ENCODE measurements at regions of chr1 and their contacts with region 1.

Region 1: DNA sequence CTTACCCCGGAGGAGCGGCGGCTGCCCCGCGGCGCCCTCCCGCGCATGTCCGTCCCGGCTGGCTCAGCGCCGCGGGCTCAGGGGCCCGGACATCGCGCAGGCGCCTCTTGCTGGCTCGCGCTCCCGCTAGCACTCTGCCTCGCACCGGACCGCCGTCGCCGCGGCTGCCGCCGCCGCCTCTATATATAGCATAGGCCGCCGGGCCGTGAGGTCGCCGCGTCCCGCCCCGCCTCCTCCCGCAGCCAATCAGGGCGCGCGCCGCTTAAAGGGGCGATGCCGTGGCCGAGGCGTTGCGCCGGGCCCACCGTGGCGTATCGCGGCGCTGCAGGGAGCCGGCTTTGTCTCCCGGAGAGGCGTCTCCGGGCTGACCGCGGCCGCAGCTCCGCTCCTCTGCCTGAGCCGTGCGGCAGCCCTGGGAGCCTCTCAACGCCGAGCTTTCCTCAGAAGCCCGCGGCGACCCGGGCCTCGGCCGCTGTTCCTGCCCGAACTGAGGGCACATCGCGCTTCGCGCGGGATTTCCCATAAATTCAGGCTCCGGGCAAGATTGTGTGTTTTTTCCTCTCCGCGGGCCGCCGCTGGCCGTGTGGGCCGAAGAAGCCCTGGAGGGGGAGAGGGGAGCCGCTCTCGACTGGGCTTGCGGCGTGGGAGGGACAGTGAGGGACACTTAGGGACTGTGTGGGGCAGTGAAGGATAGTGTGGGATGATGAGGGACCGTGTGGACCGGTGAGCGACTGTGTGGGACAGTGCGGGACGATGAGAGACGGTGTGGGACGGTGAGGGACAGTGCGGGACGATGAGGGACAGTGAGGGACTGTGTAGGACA is at the start of gene ERRFI1:
- DNase-seq: peak; percentile 70 to 92 (median 77)
- ATAC-seq: peak; percentile 97
- H3K4me3 ChIP-seq: peak within 1 kb of the TSS; percentile 36
- H3K4me3 Mint-ChIP-seq: peak within 1 kb of the TSS; percentile 78 to 96 (median 88)
- H3K27ac ChIP-seq: peak within 1 kb of the TSS; percentile 49
- H3K27ac Mint-ChIP-seq: peak within 1 kb of the TSS; percentile 16 to 89 (median 65)
- H3K4me1 ChIP-seq: peaks cover 6 to 11% of the 10 kb centered on the region in 2 donors
- H3K4me1 Mint-ChIP-seq: peaks cover 7 to 12% (median 10%) of the 10 kb centered on the region in 7 donors
- H3K27me3 ChIP-seq: peaks cover 0 to 7% of the 10 kb centered on the region in 2 donors
- H3K27me3 Mint-ChIP-seq: peaks cover 7 to 73% (median 23%) of the 10 kb centered on the region in 5 donors
- total RNA-seq, gene ERRFI1: 0.36 to 1.7 (median 0.98) TPM

Region 2: DNA sequence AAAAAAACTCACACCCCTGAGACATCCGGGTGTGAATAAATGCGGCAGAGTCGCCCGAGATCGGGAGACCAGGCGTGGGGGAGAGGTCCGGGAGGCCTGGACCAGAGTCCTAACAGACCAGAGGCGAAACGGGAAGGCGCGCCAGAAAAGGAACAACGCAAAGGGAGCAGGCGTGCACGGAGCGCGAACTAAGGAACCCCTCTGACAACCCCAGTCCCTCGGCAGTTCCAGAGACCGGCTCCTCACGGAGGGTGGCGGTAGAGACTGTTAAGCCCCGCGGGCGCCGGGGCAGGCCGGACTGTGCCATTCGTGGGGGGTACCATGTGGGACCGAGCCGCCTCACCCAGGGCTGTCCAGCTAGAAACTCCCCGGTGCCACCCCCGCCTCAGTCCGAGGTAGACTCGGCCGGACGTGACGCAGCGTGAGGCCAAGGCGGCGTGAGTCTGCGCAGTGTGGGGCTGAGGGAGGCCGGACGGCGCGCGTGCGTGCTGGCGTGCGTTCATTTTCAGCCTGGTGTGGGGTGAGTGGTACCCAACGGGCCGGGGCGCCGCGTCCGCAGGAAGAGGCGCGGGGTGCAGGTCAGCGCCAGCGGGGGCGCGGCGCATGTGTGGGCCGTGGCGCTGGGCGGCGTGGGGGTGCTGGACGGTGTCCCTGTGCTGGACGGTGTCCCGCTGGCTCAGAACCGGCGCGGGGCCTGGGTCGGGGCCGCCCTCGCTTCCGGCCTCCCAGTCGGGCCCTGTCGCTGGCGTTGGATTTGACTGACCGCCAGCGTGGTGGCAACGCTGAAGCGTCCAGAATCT is 64.9 kb before region 1 on chr1 and contains the start of gene PARK7:
- CTCF ChIA-PET with region 1: no interaction called
- POLR2A ChIA-PET with region 1: no interaction called
- intact Hi-C with region 1: loop called in 1 of 2 experiments (anchors 1 kb)
- DNase-seq: peak; percentile 97 to 100 (median 99)
- ATAC-seq: peak; percentile 99
- H3K4me3 ChIP-seq: peak within 1 kb of the TSS; percentile 65
- H3K4me3 Mint-ChIP-seq: peak within 1 kb of the TSS; percentile 84 to 100 (median 98)
- H3K27ac ChIP-seq: peak within 1 kb of the TSS; percentile 95
- H3K27ac Mint-ChIP-seq: peak within 1 kb of the TSS; percentile 97 to 100 (median 99)
- H3K4me1 ChIP-seq: peaks cover 28 to 44% of the 10 kb centered on the region in 2 donors
- H3K4me1 Mint-ChIP-seq: peaks cover 16 to 80% (median 58%) of the 10 kb centered on the region in 7 donors
- H3K27me3 ChIP-seq: no peaks in the 10 kb centered on the region
- H3K27me3 Mint-ChIP-seq: no peaks in the 10 kb centered on the region
- total RNA-seq, gene PARK7: 97.1 to 255 (median 106) TPM

Region 3: GRCh38 chr1:8015036-8015808 is 11.1 kb before region 1 on chr1:
- CTCF ChIA-PET with region 1: interaction called, 7 read pairs
- POLR2A ChIA-PET with region 1: interaction called, 3 read pairs
- intact Hi-C with region 1: loop called (anchors 1 to 2 kb)
- DNase-seq: peak in 8 of 9 donors; percentile 32 to 67 (median 58)
- ATAC-seq: peak; percentile 80
- H3K4me3 ChIP-seq: no peak overlapping the region
- H3K4me3 Mint-ChIP-seq: no peak overlapping the region
- H3K27ac ChIP-seq: no peak overlapping the region
- H3K27ac Mint-ChIP-seq: no peak overlapping the region
- H3K4me1 ChIP-seq: no peaks in the 10 kb centered on the region
- H3K4me1 Mint-ChIP-seq: peaks cover 0 to 3% (median 0%) of the 10 kb centered on the region in 7 donors
- H3K27me3 ChIP-seq: peaks cover 0 to 7% of the 10 kb centered on the region in 2 donors
- H3K27me3 Mint-ChIP-seq: peaks cover 16 to 31% (median 27%) of the 10 kb centered on the region in 5 donors

Region 4: DNA sequence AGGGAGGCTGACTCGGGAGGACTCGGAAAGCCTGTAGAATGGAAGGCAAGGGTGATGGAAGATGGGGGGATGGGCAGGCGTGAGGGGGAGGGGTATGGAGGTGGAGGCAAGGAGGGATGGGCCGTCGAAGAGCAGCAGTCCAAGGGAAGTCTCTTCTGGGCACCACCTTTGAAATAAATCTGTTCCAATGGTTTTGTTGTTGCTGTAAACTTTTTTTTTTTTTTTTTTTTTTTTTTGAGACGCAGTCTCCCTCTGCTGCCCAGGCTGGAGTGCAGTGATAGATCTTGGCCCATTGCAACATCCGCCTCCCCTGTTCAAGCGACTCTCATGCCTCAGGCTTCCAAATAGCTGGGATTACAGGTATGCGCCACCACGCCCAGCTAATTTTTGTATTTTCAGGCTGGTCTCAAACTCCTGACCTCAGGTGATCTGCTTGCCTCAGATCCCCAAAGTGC is 212.5 kb after region 1 on chr1:
- CTCF ChIA-PET with region 1: interaction called, 4 read pairs
- POLR2A ChIA-PET with region 1: no interaction called
- intact Hi-C with region 1: loop called in 1 of 2 experiments (anchors 1 kb)
- DNase-seq: no peak
- ATAC-seq: no peak
- H3K4me3 ChIP-seq: no peak overlapping the region
- H3K4me3 Mint-ChIP-seq: no peak overlapping the region
- H3K27ac ChIP-seq: no peak overlapping the region
- H3K27ac Mint-ChIP-seq: no peak overlapping the region
- H3K4me1 ChIP-seq: no peaks in the 10 kb centered on the region
- H3K4me1 Mint-ChIP-seq: peaks cover 0 to 9% (median 6%) of the 10 kb centered on the region in 7 donors
- H3K27me3 ChIP-seq: no peaks in the 10 kb centered on the region
- H3K27me3 Mint-ChIP-seq: peaks cover 0 to 8% (median 7%) of the 10 kb centered on the region in 5 donors

Region 5: DNA sequence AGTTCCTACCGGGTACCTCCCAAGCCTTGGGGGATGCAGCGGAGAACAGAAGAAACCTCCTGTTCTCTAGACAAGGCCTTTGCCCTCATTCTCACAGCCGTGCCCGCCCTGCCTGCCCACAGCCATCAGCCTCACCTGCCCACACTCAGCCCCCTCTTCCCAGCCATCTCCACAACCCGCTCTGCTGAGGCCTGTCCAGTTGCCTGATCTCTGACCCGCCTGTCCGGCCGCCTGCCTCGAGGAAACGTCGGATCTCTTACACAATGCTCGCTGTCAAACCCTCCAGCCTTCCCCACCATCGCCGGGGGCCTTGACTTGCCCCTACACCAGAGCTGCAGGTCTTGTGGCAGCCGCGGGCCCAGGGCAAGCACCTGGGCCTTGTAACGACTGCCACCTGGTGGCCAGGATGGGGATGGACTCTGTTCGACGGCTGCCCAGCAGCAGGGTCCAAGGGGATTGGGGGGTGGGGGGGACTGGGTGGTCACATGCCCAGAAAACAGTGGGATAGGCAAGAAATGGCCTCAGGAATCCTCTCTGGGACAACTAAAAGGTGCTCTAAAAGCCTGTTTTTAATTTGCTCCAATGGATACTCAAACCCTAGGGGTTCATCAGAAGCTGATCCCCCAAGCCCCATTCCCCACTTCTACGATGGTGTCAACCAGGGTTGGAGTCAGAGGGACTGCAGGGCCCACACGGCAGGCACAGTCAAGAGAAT is 322.6 kb after region 1 on chr1:
- CTCF ChIA-PET with region 1: interaction called, 32 read pairs
- POLR2A ChIA-PET with region 1: no interaction called
- intact Hi-C with region 1: loop called (anchors 1 kb)
- DNase-seq: peak; percentile 46 to 77 (median 64)
- ATAC-seq: peak; percentile 88
- H3K4me3 ChIP-seq: no peak overlapping the region
- H3K4me3 Mint-ChIP-seq: no peak overlapping the region
- H3K27ac ChIP-seq: no peak overlapping the region
- H3K27ac Mint-ChIP-seq: peak overlapping the region in 6 of 9 donors; percentile 6 to 71 (median 27)
- H3K4me1 ChIP-seq: peaks cover 3 to 8% of the 10 kb centered on the region in 2 donors
- H3K4me1 Mint-ChIP-seq: peaks cover 0 to 5% (median 4%) of the 10 kb centered on the region in 7 donors
- H3K27me3 ChIP-seq: no peaks in the 10 kb centered on the region
- H3K27me3 Mint-ChIP-seq: peaks cover 0 to 3% (median 0%) of the 10 kb centered on the region in 5 donors

Region 6: DNA sequence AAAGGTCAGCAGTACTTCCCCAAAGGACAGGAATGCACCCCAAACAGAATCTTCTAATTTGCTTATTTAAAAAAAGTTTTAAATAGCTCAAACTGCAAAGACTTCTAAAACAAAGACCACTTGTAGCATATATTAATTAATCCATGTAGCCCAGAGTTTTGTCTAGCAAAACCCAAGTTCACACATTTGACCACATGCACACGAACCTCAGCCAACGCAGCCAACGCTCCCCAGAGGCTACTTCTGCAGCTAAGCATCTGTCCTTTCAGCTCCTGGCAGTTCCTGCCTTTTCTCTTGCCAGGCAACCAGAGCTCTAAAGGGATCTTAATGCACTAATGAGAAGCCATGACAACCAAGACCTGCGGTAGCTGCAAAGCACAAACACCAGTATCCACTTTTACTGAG is 701.4 kb after region 1 on chr1:
- CTCF ChIA-PET with region 1: no interaction called
- POLR2A ChIA-PET with region 1: no interaction called
- intact Hi-C with region 1: loop called in 1 of 2 experiments (anchors 5 kb)
- DNase-seq: no peak
- ATAC-seq: no peak
- H3K4me3 ChIP-seq: no peak overlapping the region
- H3K4me3 Mint-ChIP-seq: no peak overlapping the region
- H3K27ac ChIP-seq: no peak overlapping the region
- H3K27ac Mint-ChIP-seq: no peak overlapping the region
- H3K4me1 ChIP-seq: no peaks in the 10 kb centered on the region
- H3K4me1 Mint-ChIP-seq: peaks cover 5 to 24% (median 9%) of the 10 kb centered on the region in 7 donors
- H3K27me3 ChIP-seq: no peaks in the 10 kb centered on the region
- H3K27me3 Mint-ChIP-seq: no peaks in the 10 kb centered on the region